KBM-7 (cell line): ENCODE measurements at regions of chr1 and their contacts with region 1.

Region 1: DNA sequence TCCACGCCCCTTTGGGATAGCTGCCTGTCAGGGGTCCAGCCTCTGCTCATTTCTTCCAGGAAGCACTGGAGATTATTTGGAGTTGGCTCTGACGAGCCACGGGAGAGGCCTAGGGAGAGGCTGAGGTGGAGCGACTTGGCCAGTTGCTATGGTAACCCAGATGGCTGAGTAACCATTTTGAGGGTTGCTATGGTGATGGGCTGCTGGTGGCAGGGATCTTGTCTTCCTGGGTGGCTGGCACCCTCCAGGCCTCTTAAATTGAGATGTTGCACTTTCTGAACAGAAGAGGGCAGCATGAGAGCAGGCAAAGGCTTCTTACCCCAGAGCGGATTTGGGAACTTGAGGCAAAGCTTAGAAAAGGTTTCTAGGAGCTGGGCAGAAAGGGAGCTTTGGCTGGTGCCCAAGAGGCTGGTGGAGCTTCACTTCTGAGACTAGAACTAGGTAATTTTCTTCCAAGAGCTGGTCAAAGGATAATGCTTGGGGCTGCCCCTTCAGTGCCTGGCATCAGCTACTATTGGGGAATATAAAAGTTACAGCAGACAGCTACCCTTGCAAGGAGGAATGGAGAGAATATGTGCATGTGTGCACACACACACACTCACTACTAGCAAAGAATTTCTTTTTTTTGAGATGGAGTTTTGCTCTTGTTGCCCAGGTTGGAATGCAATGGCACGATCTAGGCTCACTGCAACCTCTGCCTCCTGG is 72.5 kb downstream of the NDUFS5 start:
- DNase-seq: peak; percentile 80

Region 2: GRCh38 chr1:38891753-38892152 is 206.9 kb before region 1 on chr1:
- in situ Hi-C with region 1: no loop called
- DNase-seq: no peak

Region 3: GRCh38 chr1:39158327-39159086 is 59.8 kb after region 1 on chr1:
- in situ Hi-C with region 1: no loop called
- DNase-seq: no peak

Region 4: DNA sequence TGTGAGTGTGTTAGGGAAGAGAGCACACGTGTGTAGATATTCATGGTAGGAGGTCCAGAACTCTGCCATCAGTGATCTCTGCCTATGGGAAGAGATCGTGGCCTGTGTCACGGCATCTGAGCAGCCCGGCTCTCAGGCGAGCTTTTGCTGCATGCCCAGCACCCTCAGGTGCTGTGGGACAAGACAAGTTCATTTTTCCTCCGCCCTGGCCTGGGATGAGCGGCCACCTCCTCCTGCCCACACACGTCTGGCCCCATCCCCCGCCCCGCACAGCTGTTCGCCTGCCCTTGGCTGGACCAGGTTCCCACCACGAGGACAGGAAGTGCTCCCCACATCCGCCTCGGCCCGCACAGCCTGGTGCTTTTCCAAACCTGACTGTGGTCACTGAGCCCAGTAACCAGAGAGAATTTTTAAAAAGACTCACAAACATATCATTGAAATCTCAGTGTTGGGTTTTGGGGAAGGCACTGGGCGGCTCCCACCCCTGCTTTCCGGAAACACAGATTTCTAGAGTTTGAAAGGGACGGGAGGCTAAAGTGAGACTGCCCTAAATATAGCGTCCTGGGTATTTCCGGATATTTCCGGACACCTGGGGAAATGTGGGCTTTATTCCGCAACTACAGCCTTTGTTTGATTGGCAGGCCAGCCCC is 410.8 kb after region 1 on chr1:
- in situ Hi-C with region 1: no loop called
- DNase-seq: peak; percentile 49

Region 5: GRCh38 chr1:39538588-39539465 is 440.1 kb after region 1 on chr1:
- in situ Hi-C with region 1: loop called (anchors 25 kb)
- DNase-seq: peak; percentile 64